ENCODE measurements at regions of chr10 and their contacts with region 1.

Region 1: DNA sequence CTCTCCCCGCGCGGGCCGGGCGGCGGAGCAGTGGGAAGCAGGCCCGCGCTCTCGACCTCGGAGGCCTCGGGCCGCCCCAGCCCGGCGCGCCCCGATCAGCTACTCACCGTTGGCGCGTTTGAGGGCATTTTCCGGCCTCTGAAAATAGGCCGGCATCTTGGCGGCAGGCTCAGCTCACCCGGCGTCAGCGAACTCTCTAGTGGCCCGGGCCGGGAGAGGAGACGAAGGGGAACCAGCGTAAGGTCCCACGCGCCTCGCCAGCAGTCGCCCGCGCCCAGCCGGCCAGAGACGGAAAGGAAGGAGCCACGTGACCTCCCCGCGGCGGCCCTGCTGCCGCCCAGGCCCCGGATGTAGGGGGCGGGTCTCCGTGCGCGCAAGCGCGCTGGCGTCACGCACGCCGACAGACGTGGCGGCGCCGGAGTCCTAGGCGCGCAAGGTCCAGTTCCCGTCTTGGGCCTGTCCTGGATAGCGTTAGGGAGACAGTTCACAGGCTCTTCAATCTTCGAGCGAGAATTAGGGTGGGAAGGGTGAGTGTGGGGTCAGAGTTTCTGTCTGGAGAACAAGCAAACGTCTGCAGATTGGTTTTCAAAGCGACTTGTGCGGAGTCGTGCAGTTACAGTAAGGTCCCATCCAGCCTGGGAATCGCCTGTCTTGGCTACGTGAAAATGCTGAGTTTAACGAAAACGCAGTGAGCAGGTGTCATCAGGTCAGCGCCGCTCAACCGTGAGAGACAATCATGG is at the start of gene EIF3A:
- DNase-seq: peak; percentile 82 to 97 (median 89)
- H3K4me3 ChIP-seq: peak within 1 kb of the TSS; percentile 66 to 100 (median 96)
- H3K27ac ChIP-seq: peak within 1 kb of the TSS; percentile 58 to 99 (median 93)
- H3K27me3 ChIP-seq: no peaks in the 10 kb centered on the region
- CTCF ChIP-seq: peak in 30 of 56 donors; percentile 4 to 58 (median 32)
- total RNA-seq, gene EIF3A: 63.1 to 89.9 (median 72.7) TPM

Region 2: GRCh38 chr10:119028900-119029612 is 51.6 kb before region 1 on chr10:
- intact Hi-C with region 1: loop called in 1 of 2 experiments (anchors 5 kb)
- DNase-seq: peak; percentile 66 to 95 (median 88)
- H3K4me3 ChIP-seq: peak overlapping the region; percentile 28 to 75 (median 60)
- H3K27ac ChIP-seq: peak overlapping the region in 52 of 59 donors; percentile 1 to 85 (median 70)
- H3K27me3 ChIP-seq: no peaks in the 10 kb centered on the region
- CTCF ChIP-seq: peak in 31 of 56 donors; percentile 8 to 56 (median 33)

Region 3: GRCh38 chr10:119165171-119166110 is 84.8 kb after region 1 on chr10 and contains the start of gene SFXN4:
- intact Hi-C with region 1: loop called in 1 of 2 experiments (anchors 2 kb)
- DNase-seq: peak; percentile 75 to 91 (median 81)
- H3K4me3 ChIP-seq: peak within 1 kb of the TSS; percentile 61 to 98 (median 87)
- H3K27ac ChIP-seq: peak within 1 kb of the TSS; percentile 21 to 98 (median 90)
- H3K27me3 ChIP-seq: no peaks in the 10 kb centered on the region
- CTCF ChIP-seq: peak in 36 of 56 donors; percentile 7 to 62 (median 31)
- total RNA-seq, gene SFXN4: 22.4 to 49.6 (median 31.7) TPM

Region 4: DNA sequence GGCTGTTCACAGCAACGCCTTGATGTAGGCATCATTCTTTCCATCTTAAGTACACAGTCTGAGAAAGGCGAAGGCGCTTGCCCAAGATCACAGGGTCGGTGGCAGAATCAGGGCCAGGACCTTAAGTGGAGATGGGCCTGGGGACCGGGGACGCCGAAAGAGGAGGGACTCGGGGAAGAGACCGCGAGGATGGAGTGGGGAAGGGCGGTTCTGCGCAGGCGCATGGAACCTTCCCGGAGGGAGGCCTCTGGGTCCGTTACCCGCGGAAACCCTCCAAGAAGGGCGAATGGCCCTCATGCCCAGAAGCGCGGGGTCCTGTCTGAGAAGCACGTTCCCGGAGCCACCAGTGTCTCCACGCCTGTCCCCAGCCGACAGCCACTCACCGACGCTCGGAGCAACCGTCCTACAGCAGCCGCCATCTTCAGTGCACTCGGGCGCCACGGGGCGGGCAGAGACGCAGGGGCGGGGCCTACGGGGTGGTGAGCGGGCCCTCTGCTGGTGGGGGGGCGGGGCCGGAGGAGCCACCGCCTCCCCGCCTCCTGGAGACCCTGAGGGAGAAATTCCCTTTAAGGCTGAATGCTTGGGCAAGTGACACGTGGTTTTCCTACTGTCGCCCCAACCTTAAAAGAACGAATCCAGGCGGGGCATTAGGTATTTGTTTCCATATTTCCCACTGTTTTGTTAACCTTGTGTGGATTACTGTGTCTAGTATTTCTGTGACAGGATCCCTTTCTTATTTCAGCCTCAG is 97.9 kb after region 1 on chr10 and contains the start of gene PRDX3:
- intact Hi-C with region 1: loop called in 1 of 2 experiments (anchors 5 kb)
- DNase-seq: peak; percentile 84 to 94 (median 92)
- H3K4me3 ChIP-seq: peak within 1 kb of the TSS; percentile 62 to 93 (median 80)
- H3K27ac ChIP-seq: peak within 1 kb of the TSS in 58 of 59 donors; percentile 86 to 99 (median 97)
- H3K27me3 ChIP-seq: no peaks in the 10 kb centered on the region
- CTCF ChIP-seq: peak in 52 of 56 donors; percentile 12 to 74 (median 52)
- total RNA-seq, gene PRDX3: 62.3 to 112 (median 87.0) TPM